Left ventricle myocardium superior (tissue), 1 donor: ENCODE measurements at regions of chr6 and their contacts with region 1.

Region 1: DNA sequence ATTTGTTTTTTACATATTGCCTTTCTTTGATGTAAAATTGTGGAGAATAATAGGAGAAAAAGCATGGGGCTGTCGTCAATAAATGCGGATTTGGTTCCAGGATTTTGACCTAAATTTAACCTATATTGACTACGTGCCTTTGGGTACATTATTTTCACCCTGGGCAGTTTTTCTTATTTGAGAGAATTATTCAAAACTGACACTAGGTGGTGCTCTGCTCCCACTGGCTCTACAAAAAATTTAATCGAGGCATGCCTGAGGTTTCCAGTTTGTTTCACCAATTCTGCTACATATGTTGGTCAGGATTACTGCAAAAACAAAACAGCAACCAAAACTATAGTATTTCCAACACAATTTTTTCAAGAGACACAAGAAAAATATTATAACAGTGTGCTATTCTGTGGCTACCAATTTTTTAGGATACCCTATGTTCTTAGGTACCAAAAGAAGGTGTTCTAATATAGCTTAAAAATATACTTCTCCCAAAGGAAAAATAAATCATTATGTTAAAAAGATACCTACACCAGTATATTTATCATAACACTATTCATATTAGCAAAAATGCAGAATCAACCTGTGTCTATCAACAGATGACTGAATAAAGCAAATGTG is 48.6 kb upstream of the FABP7 start:
- DNase-seq: no peak
- ATAC-seq: no peak

Region 2: GRCh38 chr6:122839477-122839876 is 108.6 kb after region 1 on chr6:
- intact Hi-C with region 1: loop called (anchors 5 kb)
- DNase-seq: no peak
- ATAC-seq: peak; percentile 65